Endothelial cell of umbilical vein (primary cell): ENCODE measurements at regions of chr17 and their contacts with region 1.

Region 1: GRCh38 chr17:75131280-75132017 is at the start of gene NT5C:
- DNase-seq: peak; percentile 73
- H3K4me3 ChIP-seq: peak within 1 kb of the TSS; percentile 47 to 53 (median 50)
- H3K27ac ChIP-seq: peak within 1 kb of the TSS; percentile 51
- H3K4me1 ChIP-seq: peaks cover 9% of the 10 kb centered on the region
- H3K27me3 ChIP-seq: no peaks in the 10 kb centered on the region
- CTCF ChIP-seq: peak; percentile 72
- POLR2A ChIP-seq: peak; percentile 83
- total RNA-seq, gene NT5C: 32.6 and 39.2 TPM in 2 replicates

Region 2: GRCh38 chr17:75046582-75047289 is 84.7 kb before region 1 on chr17 and contains the starts of genes ATP5PD and KCTD2:
- CTCF ChIA-PET with region 1: no interaction called
- POLR2A ChIA-PET with region 1: no interaction called
- dilution Hi-C with region 1: no loop called
- intact Hi-C with region 1: no loop called
- DNase-seq: peak; percentile 98
- H3K4me3 ChIP-seq: peak within 1 kb of the TSS; percentile 58 to 93 (median 67)
- H3K27ac ChIP-seq: peak within 1 kb of the TSS; percentile 19
- H3K4me1 ChIP-seq: peaks cover 13% of the 10 kb centered on the region
- H3K27me3 ChIP-seq: no peaks in the 10 kb centered on the region
- CTCF ChIP-seq: no peak
- POLR2A ChIP-seq: peak; percentile 93
- total RNA-seq, gene ATP5PD: 200 and 202 TPM in 2 replicates
- total RNA-seq, gene KCTD2: 20.6 and 23.2 TPM in 2 replicates

Region 3: DNA sequence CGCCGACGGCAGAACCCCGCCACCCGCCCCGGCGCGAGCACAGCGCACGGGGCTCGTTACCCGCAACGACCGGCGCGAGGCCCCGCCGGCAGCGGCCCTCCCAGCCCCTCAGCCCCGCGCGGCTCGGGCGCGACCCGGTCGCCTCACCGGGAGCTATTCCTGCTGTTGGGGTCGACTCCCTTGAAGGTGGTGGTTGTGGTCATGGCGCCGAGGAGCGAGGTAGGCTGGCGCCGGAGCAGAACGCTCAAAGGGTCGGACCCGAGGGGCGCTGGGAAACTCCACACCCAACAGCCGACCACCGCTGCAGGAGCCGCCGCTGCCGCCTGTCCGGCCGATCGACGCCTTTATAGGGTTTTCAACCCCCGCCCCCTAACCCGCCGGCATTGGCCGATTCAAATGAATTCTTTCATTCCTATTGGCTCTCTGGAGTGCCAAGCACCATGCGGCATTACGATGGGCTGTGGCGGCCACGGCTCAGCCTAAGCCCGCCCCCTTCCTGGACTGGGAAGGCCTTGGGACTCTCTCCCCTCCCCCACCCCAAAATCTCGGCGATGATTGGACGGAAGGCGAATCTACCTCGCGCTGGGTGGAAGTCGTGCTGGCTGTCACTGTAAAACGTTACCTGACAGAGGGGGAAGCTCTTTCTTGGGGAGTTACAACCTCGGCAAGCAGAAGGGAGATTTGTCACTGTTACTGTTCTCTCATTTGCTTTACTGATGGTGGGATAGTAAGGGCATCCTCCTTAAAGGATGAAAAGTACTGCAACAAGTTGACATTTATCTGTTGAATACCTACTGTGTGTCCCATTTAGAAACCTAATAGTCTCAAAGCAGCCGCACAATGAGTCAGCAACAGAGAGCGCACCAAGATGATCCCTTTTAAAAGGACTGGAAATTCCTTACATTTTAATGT is 23.0 kb after region 1 on chr17 and contains the start of gene JPT1:
- CTCF ChIA-PET with region 1: interaction called, 8 read pairs
- POLR2A ChIA-PET with region 1: no interaction called
- dilution Hi-C with region 1: no loop called
- intact Hi-C with region 1: loop called (anchors 1 kb)
- DNase-seq: peak; percentile 99
- H3K4me3 ChIP-seq: peak within 1 kb of the TSS; percentile 57 to 83 (median 62)
- H3K27ac ChIP-seq: peak within 1 kb of the TSS; percentile 60
- H3K4me1 ChIP-seq: peaks cover 27% of the 10 kb centered on the region
- H3K27me3 ChIP-seq: no peaks in the 10 kb centered on the region
- CTCF ChIP-seq: no peak
- POLR2A ChIP-seq: peak; percentile 100
- total RNA-seq, gene JPT1: 352 and 364 TPM in 2 replicates